PC-9 (cell line): ENCODE measurements at regions of chr9 and their contacts with region 1.

Region 1: DNA sequence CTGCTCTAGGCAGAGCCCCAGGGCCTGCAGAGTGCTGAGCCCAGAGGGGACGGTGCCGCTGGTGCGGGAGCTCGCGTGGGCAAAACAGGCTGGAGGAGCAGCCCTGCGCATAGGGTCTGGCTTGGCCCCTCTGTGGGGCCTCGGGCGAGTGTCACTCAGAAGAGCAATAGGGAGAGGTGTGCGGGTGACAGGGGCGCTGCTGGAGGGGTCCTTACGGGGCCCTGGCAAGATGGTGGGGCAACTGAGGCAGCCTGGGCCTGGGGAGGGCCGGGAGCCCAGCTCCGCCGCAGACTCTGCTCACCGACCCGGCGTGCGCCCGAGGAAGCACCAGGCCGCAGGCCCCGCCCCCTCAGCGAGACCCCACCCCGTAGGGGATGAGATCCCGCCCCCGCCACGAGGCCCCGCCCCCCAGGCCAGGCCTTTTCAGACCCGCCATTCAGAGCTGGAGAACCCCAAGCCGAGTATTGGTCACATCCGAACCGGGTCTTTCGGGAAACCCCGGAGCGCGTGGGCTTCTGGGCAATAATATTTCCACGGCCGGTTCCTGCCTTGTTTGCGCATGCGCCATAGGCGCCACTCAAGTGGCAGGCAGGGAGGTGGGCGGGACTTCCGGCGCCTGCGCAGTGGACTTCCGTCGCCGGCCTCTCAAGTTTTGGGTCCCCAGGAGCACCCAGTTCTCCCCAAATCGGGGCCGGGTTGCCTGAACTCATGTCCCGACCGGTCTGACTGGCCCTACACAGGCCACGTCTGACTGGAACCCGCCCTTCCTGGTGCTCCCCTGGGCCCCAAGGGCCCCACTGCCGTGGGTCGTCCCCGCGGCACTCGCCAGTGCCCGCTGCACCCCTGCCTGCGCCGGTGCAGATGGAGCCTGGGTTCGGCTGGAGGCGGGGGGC is 1.3 kb upstream of the RNF208 start:
- DNase-seq: peak; percentile 95 to 99
- H3K4me3 ChIP-seq: peak overlapping the region; percentile 90
- H3K27ac ChIP-seq: peak overlapping the region; percentile 79
- H3K4me1 ChIP-seq: peaks cover 54% of the 10 kb centered on the region
- H3K27me3 ChIP-seq: no peaks in the 10 kb centered on the region
- CTCF ChIP-seq: no peak

Region 2: GRCh38 chr9:137046098-137046787 is 177.1 kb before region 1 on chr9 and contains the start of gene NPDC1:
- CTCF ChIA-PET with region 1: no interaction called
- POLR2A ChIA-PET with region 1: no interaction called
- intact Hi-C with region 1: loop called (anchors 2 kb)
- DNase-seq: peak; percentile 73 to 91
- H3K4me3 ChIP-seq: peak within 1 kb of the TSS; percentile 92
- H3K27ac ChIP-seq: no peak within 1 kb of the TSS
- H3K4me1 ChIP-seq: peaks cover 15% of the 10 kb centered on the region
- H3K27me3 ChIP-seq: peaks cover 6% of the 10 kb centered on the region
- CTCF ChIP-seq: peak; percentile 87
- total RNA-seq, gene NPDC1: 89.8 and 137 TPM in 2 replicates

Region 3: GRCh38 chr9:137129456-137130175 is 93.7 kb before region 1 on chr9:
- CTCF ChIA-PET with region 1: interaction called, 3 read pairs
- POLR2A ChIA-PET with region 1: interaction called, 35 read pairs
- intact Hi-C with region 1: no loop called
- DNase-seq: peak; percentile 76 to 93
- H3K4me3 ChIP-seq: peak overlapping the region; percentile 86
- H3K27ac ChIP-seq: peak overlapping the region; percentile 54
- H3K4me1 ChIP-seq: peaks cover 28% of the 10 kb centered on the region
- H3K27me3 ChIP-seq: no peaks in the 10 kb centered on the region
- CTCF ChIP-seq: no peak

Region 4: DNA sequence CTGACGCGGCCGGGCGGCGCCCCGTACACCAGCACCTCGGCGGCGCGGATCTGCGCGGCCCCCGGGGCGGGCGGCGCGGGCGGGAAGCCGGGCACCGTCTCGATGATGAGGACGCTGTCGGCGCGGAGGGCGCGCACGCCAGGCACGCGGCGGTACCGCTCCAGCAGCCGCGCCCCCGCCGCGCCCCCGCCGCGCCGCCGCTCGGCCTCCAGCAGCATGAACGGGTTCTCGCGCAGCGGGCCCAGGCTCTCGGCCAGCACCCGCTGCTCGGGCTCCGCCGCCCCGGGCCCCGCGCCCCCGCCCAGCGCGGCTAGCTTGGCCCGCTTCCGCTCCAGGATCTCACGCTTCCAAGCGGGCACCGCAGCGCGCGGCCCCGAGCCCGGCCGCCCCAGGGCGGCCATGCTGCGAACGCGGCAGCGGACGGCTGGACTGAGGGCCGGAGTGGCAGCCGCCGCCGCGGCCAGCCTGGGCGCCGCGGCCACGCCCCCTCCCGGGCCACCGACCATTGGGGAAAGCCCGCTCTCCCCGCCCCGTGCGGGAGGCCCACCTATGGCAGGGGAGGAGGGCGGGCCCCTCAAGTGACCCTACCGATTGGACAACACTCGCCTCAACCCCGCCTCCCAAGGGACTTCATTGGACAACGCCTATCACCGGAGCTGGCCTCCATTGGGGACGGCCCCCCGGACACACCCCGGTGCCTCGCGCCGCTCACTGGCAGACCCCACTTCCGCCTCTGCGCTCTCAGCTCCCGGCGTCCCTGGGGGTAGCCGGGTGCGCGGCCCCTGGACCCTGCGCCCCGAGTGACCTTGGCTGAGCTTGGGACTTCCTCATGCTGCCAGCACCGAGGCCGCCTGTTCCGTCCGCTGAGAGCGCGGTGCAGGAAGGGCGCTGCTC is 22.8 kb before region 1 on chr9 and contains the start of gene TPRN:
- CTCF ChIA-PET with region 1: interaction called, 3 read pairs
- POLR2A ChIA-PET with region 1: interaction called, 18 read pairs
- intact Hi-C with region 1: loop called (anchors 1 kb)
- DNase-seq: peak; percentile 97 to 100
- H3K4me3 ChIP-seq: peak within 1 kb of the TSS; percentile 81
- H3K27ac ChIP-seq: no peak within 1 kb of the TSS
- H3K4me1 ChIP-seq: peaks cover 61% of the 10 kb centered on the region
- H3K27me3 ChIP-seq: no peaks in the 10 kb centered on the region
- CTCF ChIP-seq: no peak
- total RNA-seq, gene TPRN: 61.0 and 61.8 TPM in 2 replicates

Region 5: DNA sequence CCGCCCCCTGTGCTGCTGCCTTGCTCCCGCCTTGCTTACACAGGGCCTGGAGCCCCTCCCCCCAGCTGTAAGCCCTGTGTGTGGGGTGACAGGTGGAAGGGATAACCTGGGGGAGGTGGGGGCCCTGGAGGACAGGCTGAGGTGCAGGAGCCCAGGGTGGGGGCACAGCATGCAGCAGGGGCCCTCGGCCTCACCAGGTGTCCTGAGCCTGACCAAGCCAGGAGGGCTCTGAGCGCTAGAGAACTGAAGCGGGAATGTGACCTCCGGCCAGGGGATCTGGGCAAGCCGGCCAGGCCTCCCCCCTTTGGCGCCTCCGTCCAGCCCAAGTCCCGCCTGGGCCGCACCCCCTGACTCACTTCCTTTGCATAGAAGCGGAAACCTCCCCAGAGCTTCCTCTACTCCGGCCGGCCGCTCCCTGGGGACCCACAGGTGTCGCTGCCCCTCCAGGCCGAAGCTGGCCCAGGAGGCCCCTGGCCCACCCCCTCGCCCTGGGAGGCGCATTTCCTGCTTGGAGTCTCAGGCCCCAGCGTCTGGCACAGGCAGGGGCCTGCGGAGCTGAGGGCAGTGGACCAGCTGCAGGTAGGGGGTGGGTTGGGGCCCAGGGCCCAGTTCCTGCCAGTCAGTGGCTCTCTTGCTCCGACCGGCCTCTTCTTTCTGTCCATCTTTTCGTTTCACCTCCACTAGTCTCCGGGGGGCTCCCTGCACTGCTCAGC is 54.2 kb after region 1 on chr9 and contains the start of gene TOR4A:
- CTCF ChIA-PET with region 1: interaction called, 5 read pairs
- POLR2A ChIA-PET with region 1: interaction called, 4 read pairs
- intact Hi-C with region 1: loop called (anchors 2 kb)
- DNase-seq: peak; percentile 90 to 98
- H3K4me3 ChIP-seq: peak within 1 kb of the TSS; percentile 89
- H3K27ac ChIP-seq: peak within 1 kb of the TSS; percentile 60
- H3K4me1 ChIP-seq: peaks cover 16% of the 10 kb centered on the region
- H3K27me3 ChIP-seq: no peaks in the 10 kb centered on the region
- CTCF ChIP-seq: no peak; the same call in 1 of the 2 replicates
- total RNA-seq, gene TOR4A: 48.9 and 59.9 TPM in 2 replicates